ENCODE measurements at regions of chr11 and their contacts with region 1.

Region 1: GRCh38 chr11:90476442-90477007 is 253.7 kb upstream of the CHORDC1 start:
- DNase-seq: peak in 1 of 2 donors; percentile 10
- ATAC-seq: peak in 1 of 2 donors; percentile 66
- H3K4me3 ChIP-seq: no peak overlapping the region
- H3K27ac ChIP-seq: no peak overlapping the region
- H3K4me1 ChIP-seq: peaks cover 0 to 7% of the 10 kb centered on the region in 2 donors
- H3K27me3 ChIP-seq: no peaks in the 10 kb centered on the region
- CTCF ChIP-seq: peak; percentile 20 to 53 (median 45)
- POLR2A ChIP-seq: no peak

Region 2: DNA sequence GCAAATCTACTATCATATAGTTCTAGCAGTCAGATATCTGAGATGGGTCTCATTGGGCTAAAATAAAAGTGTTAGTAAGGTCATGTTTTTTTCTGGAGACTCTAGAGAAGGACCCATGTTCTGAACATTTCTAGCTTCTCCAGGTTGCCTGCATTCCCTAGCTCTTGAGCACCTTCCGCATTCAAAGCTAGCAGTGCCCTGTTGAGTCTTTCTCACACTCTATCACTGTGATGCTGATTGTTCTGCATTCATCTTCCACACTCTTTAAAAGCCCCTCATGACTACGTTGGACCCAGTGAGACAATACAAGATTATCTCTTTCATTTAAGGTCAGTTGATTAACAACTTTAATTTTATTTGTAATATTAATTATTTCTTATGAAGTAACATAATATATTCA is 179.6 kb after region 1 on chr11:
- in situ Hi-C with region 1: no loop called
- intact Hi-C with region 1: loop called (anchors 10 kb)
- DNase-seq: no peak
- ATAC-seq: no peak
- H3K4me3 ChIP-seq: no peak overlapping the region
- H3K27ac ChIP-seq: no peak overlapping the region
- H3K4me1 ChIP-seq: no peaks in the 10 kb centered on the region
- H3K27me3 ChIP-seq: no peaks in the 10 kb centered on the region
- CTCF ChIP-seq: no peak
- POLR2A ChIP-seq: no peak

Measured in gastrocnemius medialis (tissue), 4 donors.